Activated CD8-positive, alpha-beta memory T cell treated with anti-CD3 and anti-CD28 coated beads, Interleukin-2, amount 10 ng/mL, durations not matched to agents 7 days and 5 days (primary cell): ENCODE measurements at regions of chr3 and their contacts with region 1.

Region 1: GRCh38 chr3:42839616-42840015 is 30.4 kb downstream of the ACKR2 start:
- DNase-seq: peak; percentile 54
- ATAC-seq: peak; percentile 96
- H3K4me3 Mint-ChIP-seq: no peak overlapping the region
- H3K27ac Mint-ChIP-seq: no peak overlapping the region
- H3K4me1 Mint-ChIP-seq: peaks cover 3% of the 10 kb centered on the region
- H3K27me3 Mint-ChIP-seq: peaks cover 7% of the 10 kb centered on the region

Region 2: GRCh38 chr3:42778644-42779043 is 61.0 kb before region 1 on chr3:
- CTCF ChIA-PET with region 1: interaction called, 10 read pairs
- DNase-seq: no peak
- ATAC-seq: no peak
- H3K4me3 Mint-ChIP-seq: no peak overlapping the region
- H3K27ac Mint-ChIP-seq: no peak overlapping the region
- H3K4me1 Mint-ChIP-seq: peaks cover 3% of the 10 kb centered on the region
- H3K27me3 Mint-ChIP-seq: no peaks in the 10 kb centered on the region

Region 3: DNA sequence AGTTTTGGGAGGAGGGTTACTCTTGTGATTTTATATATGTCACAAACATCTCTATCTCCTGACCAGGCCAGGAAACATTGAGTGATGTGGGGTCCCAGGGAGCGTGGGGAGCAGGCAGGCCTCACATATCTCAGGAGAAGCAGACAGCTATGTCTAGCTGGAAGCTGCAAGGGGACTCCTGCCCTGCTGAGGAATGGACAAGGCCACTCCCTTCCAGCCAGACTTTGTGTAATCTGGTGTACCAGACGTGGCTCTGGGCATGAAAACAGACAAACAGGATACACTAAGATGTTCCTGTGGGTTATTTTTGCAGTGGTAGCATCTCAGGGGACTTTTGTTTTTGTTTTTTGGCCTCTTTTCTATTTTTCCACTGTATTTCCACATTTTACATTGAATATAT is 12.8 kb after region 1 on chr3:
- CTCF ChIA-PET with region 1: interaction called, 11 read pairs
- DNase-seq: peak; percentile 38
- ATAC-seq: no peak
- H3K4me3 Mint-ChIP-seq: no peak overlapping the region
- H3K27ac Mint-ChIP-seq: no peak overlapping the region
- H3K4me1 Mint-ChIP-seq: peaks cover 5% of the 10 kb centered on the region
- H3K27me3 Mint-ChIP-seq: no peaks in the 10 kb centered on the region